ENCODE measurements at regions of chr2 and their contacts with region 1.

Region 1: GRCh38 chr2:205834796-205835195 is 152.5 kb downstream of the NRP2 start:
- DNase-seq: no peak
- ATAC-seq: no peak
- H3K4me3 ChIP-seq: no peak overlapping the region
- H3K27ac ChIP-seq: no peak overlapping the region
- H3K4me1 ChIP-seq: no peaks in the 10 kb centered on the region
- H3K27me3 ChIP-seq: peaks cover 0 to 6% of the 10 kb centered on the region in 2 experiments; a peak in 2 of 5 replicates
- CTCF ChIP-seq: no peak
- EP300 ChIP-seq: no peak
- POLR2A ChIP-seq: no peak
- RAD21 ChIP-seq: no peak

Region 2: DNA sequence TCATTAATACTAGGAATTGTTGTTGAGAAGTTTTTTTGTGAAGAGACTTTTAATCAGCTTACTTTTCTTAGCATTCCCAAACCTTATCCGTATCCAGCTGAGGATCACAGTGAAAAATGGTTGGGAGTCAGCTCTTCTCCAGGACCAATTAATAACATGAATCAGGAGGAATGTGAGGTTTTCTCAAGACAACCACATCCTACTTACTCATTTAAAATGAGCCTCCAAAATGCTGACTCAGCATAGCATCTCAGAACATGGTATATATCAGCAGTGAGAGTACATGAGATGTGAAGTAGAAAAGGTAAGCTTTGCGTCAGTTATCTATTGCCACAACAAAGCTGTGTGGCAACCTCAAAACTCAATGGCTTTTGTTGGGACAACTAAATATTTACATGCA is 12.2 kb before region 1 on chr2:
- CTCF ChIA-PET with region 1: no interaction called
- POLR2A ChIA-PET with region 1: no interaction called
- in situ Hi-C with region 1: no loop called
- intact Hi-C with region 1: loop called (anchors 1 kb)
- DNase-seq: no peak
- ATAC-seq: no peak
- H3K4me3 ChIP-seq: no peak overlapping the region
- H3K27ac ChIP-seq: no peak overlapping the region
- H3K4me1 ChIP-seq: no peaks in the 10 kb centered on the region
- H3K27me3 ChIP-seq: no peaks in the 10 kb centered on the region; a peak in 1 of 5 replicates
- CTCF ChIP-seq: no peak
- EP300 ChIP-seq: no peak
- POLR2A ChIP-seq: no peak
- RAD21 ChIP-seq: no peak

Measured in HepG2 (cell line).